ENCODE measurements at regions of chr9 and their contacts with region 1.

Region 1: DNA sequence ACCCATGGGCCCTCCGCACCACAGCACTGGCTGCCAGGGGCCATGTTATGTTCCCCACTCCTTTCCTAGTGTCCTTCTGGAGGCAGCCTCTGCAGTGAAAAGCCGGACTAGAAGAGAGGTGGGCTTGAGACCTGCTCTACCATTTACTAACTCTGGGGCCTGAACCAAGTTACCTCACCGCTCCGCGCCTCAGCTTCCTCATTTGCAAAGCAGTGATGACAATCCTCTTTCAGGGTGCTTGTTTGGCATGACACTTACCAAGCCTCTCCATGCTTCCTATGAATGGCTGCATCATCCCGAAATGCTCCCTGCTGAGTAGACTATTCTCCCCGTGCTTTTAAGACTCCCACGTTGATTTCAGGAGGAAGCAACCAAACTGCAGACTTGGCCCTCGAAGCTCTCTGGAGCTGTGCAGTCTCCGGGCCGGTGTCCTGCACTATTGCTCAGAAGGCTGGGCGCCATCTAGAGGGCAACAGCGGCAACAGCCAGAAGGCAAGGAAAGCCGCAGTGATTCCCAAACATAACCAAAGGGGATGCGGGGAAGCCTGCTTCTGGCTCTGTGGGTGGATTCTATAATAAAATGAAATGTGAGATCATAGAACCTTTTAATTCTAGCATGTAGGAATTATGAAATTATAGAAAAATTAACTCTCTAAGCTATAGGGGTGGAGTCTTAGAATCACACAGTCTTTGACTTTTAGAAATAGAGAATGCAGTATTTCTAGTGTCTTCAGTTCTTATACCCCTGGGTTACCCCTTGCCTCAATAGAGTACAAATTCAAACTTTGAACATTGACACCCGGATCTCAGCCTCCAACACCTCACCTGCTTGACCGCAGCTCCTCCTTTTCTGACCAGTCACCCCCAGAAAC is 599.8 kb upstream of the BRINP1 start:
- DNase-seq: no peak
- H3K4me3 ChIP-seq: no peak overlapping the region
- H3K27ac ChIP-seq: no peak overlapping the region
- H3K4me1 ChIP-seq: peaks cover 0 to 14% (median 6%) of the 10 kb centered on the region in 4 donors
- H3K27me3 ChIP-seq: no peaks in the 10 kb centered on the region
- CTCF ChIP-seq: peak; percentile 83 to 95 (median 84)
- EP300 ChIP-seq: no peak
- POLR2A ChIP-seq: no peak

Region 2: DNA sequence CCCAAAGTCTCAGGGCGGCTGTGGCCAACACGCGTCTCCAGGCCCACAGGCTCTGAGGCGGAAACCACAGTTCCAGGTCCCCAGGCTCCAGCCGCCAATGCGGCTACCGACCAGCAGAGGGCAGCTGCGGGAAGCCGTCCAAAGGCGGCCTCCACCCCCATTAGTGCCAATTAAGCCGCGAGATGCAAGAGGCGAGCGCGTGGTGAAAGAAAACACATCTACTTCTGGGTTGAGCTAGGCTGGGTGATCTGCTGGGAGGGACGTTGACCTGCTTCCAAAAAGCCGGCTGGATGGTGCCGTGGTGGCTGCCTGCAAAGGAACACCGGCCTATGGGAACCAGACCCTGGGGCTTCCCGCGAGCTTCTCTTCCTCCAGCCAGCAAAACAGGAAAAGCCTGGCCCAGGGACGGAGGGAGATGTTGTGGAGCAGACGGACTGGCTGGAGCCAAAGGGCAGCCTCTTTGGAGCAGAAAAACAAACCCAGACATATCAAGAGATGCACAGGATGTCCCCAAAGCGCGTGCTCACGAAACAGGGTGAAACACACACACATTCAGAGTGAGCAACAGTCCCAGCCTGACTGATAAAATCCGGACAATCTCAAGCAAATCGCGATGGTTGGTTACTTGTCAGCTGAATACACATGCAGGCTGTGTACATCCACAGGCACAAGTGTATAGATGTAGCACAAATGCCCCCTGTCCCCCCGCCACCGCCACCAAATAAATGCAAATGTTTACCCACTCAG is 412.8 kb before region 1 on chr9:
- intact Hi-C with region 1: loop called (anchors 1 kb)
- DNase-seq: no peak
- H3K4me3 ChIP-seq: peak overlapping the region; percentile 38 to 51 (median 40)
- H3K27ac ChIP-seq: peak overlapping the region in 3 of 4 donors; percentile 7 to 58 (median 7)
- H3K4me1 ChIP-seq: peaks cover 0 to 13% (median 11%) of the 10 kb centered on the region in 4 donors
- H3K27me3 ChIP-seq: no peaks in the 10 kb centered on the region
- CTCF ChIP-seq: peak; percentile 81 to 97 (median 92)
- EP300 ChIP-seq: no peak
- POLR2A ChIP-seq: no peak

Region 3: DNA sequence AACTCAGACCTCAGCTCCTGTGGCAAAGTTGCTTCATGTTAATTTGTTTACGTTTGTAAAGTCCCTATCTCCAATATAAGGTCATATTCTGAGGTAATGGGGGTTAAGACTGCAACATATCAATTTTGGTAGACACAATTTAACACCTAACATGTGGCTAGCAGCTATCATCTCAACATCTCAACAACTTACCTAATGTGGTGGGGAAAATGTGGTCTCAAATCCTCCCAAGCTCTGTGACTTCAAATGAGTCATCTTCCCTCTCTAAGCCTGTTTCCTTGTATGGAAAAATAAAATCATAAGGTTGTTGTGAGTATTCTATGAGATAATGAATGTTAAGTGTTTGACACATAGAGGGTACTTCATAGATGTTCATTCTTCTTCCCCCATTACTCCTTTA is 167.6 kb after region 1 on chr9:
- intact Hi-C with region 1: no loop called
- DNase-seq: no peak
- H3K4me3 ChIP-seq: no peak overlapping the region
- H3K27ac ChIP-seq: no peak overlapping the region
- H3K4me1 ChIP-seq: no peaks in the 10 kb centered on the region
- H3K27me3 ChIP-seq: no peaks in the 10 kb centered on the region
- CTCF ChIP-seq: no peak
- EP300 ChIP-seq: no peak
- POLR2A ChIP-seq: no peak